ENCODE measurements at regions of chr15 and their contacts with region 1.

Region 1: DNA sequence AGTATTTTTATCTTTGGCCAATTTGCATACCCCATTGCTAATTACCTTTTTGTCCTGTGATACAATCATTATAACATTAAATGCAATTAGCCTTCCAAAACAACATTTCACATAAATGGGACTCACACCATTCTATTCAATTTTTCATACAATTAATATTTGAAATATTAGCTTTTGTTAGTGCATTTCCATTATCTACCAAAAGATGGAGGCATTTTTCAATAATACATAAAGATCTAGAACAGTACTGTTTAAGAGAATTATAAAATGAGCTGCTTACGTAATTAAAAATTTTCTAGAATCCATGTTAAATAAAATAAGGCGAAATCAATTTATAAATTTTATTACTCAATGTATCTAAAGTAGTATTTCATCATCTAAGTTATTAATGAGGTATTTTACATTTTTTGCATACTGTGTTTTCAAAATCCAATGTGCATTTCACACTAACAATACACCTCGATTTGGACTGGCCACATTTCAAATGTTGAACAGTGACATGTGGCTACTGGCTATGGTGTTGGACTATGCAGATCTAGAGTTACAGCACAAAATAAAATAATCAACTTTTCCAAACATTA is 74.3 kb downstream of the TJP1 start:
- DNase-seq: no peak
- ATAC-seq: no peak
- H3K4me3 ChIP-seq: no peak overlapping the region
- H3K27ac ChIP-seq: no peak overlapping the region
- H3K4me1 ChIP-seq: no peaks in the 10 kb centered on the region
- H3K27me3 ChIP-seq: no peaks in the 10 kb centered on the region

Region 2: DNA sequence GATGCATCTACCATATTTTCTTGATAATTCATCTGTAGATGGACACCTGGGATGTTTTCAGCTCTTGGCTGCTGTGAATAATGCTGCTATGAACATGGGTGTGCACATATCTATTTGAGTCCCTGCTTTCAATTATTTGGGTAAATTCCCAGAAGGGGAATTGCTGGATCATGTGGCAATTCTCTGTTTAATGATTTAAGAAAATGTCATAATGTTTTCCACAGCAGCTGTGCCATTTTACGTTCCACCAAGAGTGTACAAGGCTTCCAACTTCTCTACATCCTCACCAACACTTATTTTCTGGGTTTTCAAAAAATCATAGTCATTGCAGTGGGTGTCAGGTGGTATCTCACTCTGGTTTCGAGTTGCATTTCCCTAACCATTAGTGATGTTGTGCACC is 542.7 kb before region 1 on chr15:
- intact Hi-C with region 1: no loop called
- DNase-seq: no peak
- ATAC-seq: no peak
- H3K4me3 ChIP-seq: no peak overlapping the region
- H3K27ac ChIP-seq: no peak overlapping the region
- H3K4me1 ChIP-seq: no peaks in the 10 kb centered on the region
- H3K27me3 ChIP-seq: no peaks in the 10 kb centered on the region

Region 3: GRCh38 chr15:29698030-29698701 is 49.8 kb before region 1 on chr15:
- intact Hi-C with region 1: loop called in 1 of 4 experiments (anchors 10 kb)
- DNase-seq: no peak
- ATAC-seq: no peak
- H3K4me3 ChIP-seq: no peak overlapping the region
- H3K27ac ChIP-seq: no peak overlapping the region
- H3K4me1 ChIP-seq: no peaks in the 10 kb centered on the region
- H3K27me3 ChIP-seq: no peaks in the 10 kb centered on the region

Region 4: GRCh38 chr15:29913528-29914135 is 165.7 kb after region 1 on chr15:
- intact Hi-C with region 1: loop called in 1 of 4 experiments (anchors 10 kb)
- DNase-seq: no peak
- ATAC-seq: peak; percentile 48 to 70
- H3K4me3 ChIP-seq: no peak overlapping the region
- H3K27ac ChIP-seq: peak overlapping the region; percentile 18
- H3K4me1 ChIP-seq: peaks cover 9% of the 10 kb centered on the region
- H3K27me3 ChIP-seq: no peaks in the 10 kb centered on the region

Measured in right cardiac atrium (tissue), 5 donors.